ENCODE measurements at regions of chr7 and their contacts with region 1.

Region 1: DNA sequence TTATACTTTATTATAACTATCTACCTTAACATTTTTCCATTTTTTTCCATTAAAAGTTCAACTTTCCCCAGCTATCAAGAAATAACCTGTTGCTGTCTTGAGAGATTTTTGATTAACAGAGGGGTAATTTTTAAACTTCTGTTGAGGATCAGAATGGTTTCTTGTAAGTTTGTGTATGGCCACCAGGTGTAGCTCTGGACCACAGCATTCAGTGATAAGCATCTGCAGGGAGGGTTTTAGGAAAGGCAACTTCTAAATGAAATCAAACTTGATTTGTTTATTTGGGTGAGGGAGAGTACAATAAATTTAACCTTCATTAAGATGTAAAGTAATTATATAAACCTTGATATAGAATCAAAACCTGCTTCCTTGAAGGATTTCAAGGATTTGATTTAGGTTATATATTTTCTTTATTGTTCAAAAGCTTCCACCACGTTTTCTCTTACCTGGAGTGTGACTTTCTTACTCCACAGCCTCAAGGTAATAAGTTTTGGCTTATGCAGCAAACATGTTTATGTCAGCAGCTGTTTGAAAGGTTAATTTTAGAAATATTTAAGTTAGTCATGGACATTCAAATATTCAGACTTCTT is 153.3 kb downstream of the STK31 start:
- DNase-seq: peak; percentile 53
- H3K4me3 ChIP-seq: no peak overlapping the region
- H3K27ac ChIP-seq: peak overlapping the region in 1 of 2 experiments; percentile 16; a peak in 1 of 4 replicates
- H3K4me1 ChIP-seq: peaks cover 0 to 6% of the 10 kb centered on the region in 2 experiments; a peak in 1 of 4 replicates
- H3K27me3 ChIP-seq: no peaks in the 10 kb centered on the region
- CTCF ChIP-seq: peak; percentile 96
- EP300 ChIP-seq: no peak
- RAD21 ChIP-seq: peak; percentile 99

Region 2: DNA sequence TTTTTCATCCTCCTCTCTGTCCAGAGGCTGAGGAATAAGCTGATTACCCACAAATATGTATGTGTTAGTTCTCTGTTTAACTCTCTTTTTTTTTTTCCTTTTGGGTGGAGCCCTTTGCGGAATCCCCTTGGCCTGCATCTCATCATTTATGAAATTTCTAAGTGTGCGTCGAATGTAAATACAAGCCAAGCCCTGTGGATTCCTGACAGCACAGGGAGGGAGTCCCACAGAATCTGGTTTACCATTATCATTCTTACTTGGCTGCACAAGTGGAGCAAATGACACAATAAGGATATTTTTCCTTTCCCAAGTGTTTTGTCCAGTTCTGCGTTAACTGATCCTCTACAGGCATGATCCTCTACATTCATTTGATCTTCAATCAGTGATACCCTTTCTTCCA is 141.8 kb before region 1 on chr7:
- CTCF ChIA-PET with region 1: no interaction called
- POLR2A ChIA-PET with region 1: no interaction called
- DNase-seq: no peak
- H3K4me3 ChIP-seq: no peak overlapping the region
- H3K27ac ChIP-seq: no peak overlapping the region
- H3K4me1 ChIP-seq: no peaks in the 10 kb centered on the region
- H3K27me3 ChIP-seq: no peaks in the 10 kb centered on the region
- CTCF ChIP-seq: no peak
- EP300 ChIP-seq: no peak
- RAD21 ChIP-seq: no peak

Region 3: DNA sequence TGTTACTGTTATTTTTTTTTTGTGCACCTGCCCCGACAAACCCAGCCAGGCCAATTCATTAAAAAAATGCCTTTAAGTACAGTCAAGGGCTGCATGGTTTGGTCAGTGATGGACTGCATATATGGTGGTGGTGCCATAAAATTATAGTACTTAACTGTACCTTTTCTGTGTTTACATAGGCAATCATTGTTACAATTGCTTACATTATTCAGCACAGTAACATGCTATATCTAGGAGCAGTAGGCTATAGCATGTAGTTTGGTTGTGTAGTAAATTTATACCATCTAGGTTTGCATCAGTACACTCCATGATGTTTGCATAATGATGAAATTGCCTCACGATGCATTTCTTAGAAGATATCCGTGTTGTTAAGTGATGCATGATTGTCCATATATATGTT is 95.3 kb before region 1 on chr7:
- CTCF ChIA-PET with region 1: no interaction called
- POLR2A ChIA-PET with region 1: no interaction called
- DNase-seq: no peak
- H3K4me3 ChIP-seq: no peak overlapping the region
- H3K27ac ChIP-seq: no peak overlapping the region
- H3K4me1 ChIP-seq: no peaks in the 10 kb centered on the region
- H3K27me3 ChIP-seq: no peaks in the 10 kb centered on the region
- CTCF ChIP-seq: no peak
- EP300 ChIP-seq: no peak
- RAD21 ChIP-seq: no peak

Region 4: DNA sequence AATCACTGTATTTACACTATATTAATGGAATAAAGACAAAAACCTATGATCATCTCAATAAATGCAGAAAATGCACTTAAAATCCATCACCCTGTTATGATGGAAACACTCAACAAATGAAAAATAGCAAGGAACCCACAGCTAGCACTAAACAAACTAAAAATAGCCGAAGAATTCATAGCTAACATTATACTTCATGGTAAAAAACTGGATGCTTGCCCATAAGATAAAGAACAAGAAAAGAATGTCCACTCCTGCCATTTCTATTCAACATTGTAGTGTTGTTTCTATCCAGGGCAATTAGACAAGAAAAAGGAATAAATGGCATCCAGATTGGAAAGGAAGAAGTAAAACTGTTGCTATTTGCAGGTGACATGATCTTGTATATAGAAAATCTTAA is 11.2 kb before region 1 on chr7:
- CTCF ChIA-PET with region 1: interaction called, 31 read pairs
- POLR2A ChIA-PET with region 1: no interaction called
- DNase-seq: no peak
- H3K4me3 ChIP-seq: no peak overlapping the region
- H3K27ac ChIP-seq: no peak overlapping the region
- H3K4me1 ChIP-seq: peaks cover 0 to 4% of the 10 kb centered on the region in 2 experiments; a peak in 1 of 4 replicates
- H3K27me3 ChIP-seq: no peaks in the 10 kb centered on the region
- CTCF ChIP-seq: no peak
- EP300 ChIP-seq: peak in 1 of 2 experiments; percentile 52; a peak in 1 of 4 replicates
- RAD21 ChIP-seq: no peak

Region 5: DNA sequence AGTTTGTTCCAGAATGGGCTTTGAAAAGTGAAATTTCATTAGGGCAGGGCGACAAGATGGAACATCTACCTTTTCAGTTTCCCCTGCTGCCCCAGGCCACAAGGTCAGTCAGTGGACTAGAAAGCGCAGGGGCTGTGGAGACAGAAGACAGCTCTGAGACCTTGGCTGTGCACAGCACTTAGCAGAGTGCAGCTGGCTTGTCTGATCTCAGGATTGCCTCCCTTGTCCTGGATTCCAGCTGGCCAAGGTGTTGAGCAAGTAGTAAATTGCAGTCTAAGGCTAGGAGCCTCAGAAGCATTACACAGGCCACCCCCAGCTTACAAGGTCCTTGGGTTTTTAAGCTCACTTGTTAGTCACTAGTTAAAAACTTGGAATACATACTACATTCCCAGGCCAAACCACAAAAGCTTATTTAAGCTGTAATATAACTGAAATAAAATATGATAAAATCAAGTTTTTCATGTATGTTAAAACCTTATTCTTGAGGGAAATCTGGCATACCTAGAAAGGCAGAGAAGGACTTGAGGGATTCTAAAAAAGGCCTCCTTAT is 353.3 kb after region 1 on chr7:
- CTCF ChIA-PET with region 1: interaction called, 10 read pairs
- POLR2A ChIA-PET with region 1: no interaction called
- DNase-seq: no peak
- H3K4me3 ChIP-seq: no peak overlapping the region
- H3K27ac ChIP-seq: peak overlapping the region in 1 of 2 experiments; percentile 80; a peak in 2 of 4 replicates
- H3K4me1 ChIP-seq: peaks cover 0 to 36% of the 10 kb centered on the region in 2 experiments; a peak in 2 of 4 replicates
- H3K27me3 ChIP-seq: no peaks in the 10 kb centered on the region
- CTCF ChIP-seq: no peak
- EP300 ChIP-seq: no peak
- RAD21 ChIP-seq: peak; percentile 7; the same call in 1 of the 2 replicates

Region 6: DNA sequence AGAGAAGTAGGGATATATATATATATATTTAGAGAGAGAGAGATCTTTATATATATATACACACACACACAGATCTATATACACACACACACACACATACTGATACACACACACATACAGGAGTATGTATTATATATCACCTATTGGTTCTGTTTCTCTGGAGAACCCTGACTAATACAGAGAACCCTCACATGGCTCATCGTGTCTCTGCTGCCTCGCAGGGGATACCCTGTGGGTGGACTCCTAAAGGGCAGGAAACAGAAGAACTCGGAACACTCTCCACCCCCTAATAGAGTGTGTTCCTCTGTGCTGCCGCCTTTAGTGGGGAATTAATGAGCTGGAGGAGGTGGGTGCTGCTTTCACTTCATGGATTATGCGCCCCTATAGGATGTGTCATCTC is 507.2 kb after region 1 on chr7:
- CTCF ChIA-PET with region 1: interaction called, 12 read pairs
- POLR2A ChIA-PET with region 1: no interaction called
- DNase-seq: no peak
- H3K4me3 ChIP-seq: no peak overlapping the region
- H3K27ac ChIP-seq: no peak overlapping the region
- H3K4me1 ChIP-seq: peaks cover 0 to 7% of the 10 kb centered on the region in 2 experiments; a peak in 1 of 4 replicates
- H3K27me3 ChIP-seq: peaks cover 14% of the 10 kb centered on the region; the same call in 1 of the 2 replicates
- CTCF ChIP-seq: no peak
- EP300 ChIP-seq: no peak
- RAD21 ChIP-seq: no peak

Region 7: GRCh38 chr7:24665564-24666294 is 802.4 kb after region 1 on chr7:
- CTCF ChIA-PET with region 1: interaction called, 15 read pairs
- POLR2A ChIA-PET with region 1: no interaction called
- DNase-seq: peak; percentile 58
- H3K4me3 ChIP-seq: no peak overlapping the region
- H3K27ac ChIP-seq: no peak overlapping the region
- H3K4me1 ChIP-seq: peaks cover 5 to 6% of the 10 kb centered on the region in 2 experiments; a peak in 3 of 4 replicates
- H3K27me3 ChIP-seq: no peaks in the 10 kb centered on the region
- CTCF ChIP-seq: peak; percentile 97
- EP300 ChIP-seq: 0 out of 4 replicates have a peak, but pooled peaks of 1 of the 2 experiments have one; percentile 6
- RAD21 ChIP-seq: peak; percentile 88